Mammary epithelial cell (primary cell): ENCODE measurements at regions of chr9 and their contacts with region 1.

Region 1: DNA sequence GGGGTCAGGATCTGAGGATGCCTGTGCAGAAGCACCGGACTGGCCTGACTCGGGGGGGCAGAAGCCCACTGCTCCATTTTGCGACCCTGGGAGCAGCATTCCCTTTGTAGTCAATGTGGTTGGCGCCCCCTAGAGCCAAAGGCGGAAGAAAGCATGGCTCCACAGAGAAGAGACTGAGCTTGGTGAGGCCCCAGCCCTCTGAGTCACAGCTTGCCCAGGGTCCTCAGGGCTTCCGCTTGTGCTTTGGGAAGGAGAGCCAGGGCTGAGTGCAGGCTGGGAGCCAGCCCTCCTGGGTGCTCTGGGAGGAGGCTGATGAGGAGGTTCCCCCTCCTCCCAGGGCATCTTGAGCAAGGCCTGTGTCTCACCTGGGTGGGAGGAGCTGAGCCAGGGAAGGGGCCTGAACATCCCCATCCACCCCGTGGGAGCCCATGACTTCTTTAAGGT is 5.5 kb upstream of the AQP3 start:
- DNase-seq: peak; percentile 85
- H3K4me3 ChIP-seq: no peak overlapping the region
- H3K27ac ChIP-seq: peak overlapping the region; percentile 5
- H3K4me1 ChIP-seq: peaks cover 28% of the 10 kb centered on the region
- H3K27me3 ChIP-seq: no peaks in the 10 kb centered on the region
- CTCF ChIP-seq: peak; percentile 81 to 89

Region 2: DNA sequence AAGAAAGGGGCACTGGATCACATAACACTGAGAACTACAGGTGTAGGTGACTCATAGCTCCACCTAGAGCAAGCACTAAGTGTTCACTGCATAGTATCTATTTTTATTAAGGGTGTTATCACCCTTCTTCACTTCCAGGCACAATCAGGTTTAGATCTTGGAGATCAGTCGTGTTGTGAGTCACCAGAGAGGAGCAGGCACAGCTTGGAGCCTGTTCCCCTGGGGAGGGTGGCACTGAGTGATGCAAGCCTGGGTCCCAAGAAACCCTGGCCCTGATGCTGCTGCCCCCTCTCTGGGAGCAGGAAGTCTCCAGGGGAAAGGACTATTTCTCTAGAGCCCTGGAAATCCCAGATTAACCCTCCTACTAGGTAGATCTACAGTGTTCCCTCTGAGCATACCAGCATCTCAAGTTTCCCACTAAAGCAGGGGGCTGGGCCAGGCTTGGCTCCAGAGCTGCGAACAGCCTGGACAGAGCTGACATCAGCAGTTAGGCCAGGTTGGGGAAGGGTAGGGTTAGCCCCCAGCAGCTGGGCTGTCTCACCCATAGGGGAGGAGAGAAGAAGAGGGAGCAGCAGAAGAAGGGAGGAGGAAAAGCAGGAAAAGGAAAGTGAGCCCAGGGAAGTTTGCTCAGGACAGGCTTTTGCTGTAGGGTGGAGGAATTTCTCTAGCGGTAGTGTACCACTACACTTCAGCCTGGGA is 241.0 kb before region 1 on chr9:
- CTCF ChIA-PET with region 1: no interaction called
- dilution Hi-C with region 1: no loop called
- in situ Hi-C with region 1: no loop called
- intact Hi-C with region 1: no loop called
- DNase-seq: peak; percentile 82
- H3K4me3 ChIP-seq: no peak overlapping the region
- H3K27ac ChIP-seq: no peak overlapping the region
- H3K4me1 ChIP-seq: peaks cover 14% of the 10 kb centered on the region
- H3K27me3 ChIP-seq: no peaks in the 10 kb centered on the region
- CTCF ChIP-seq: peak in 1 of 2 donors; percentile 19

Region 3: GRCh38 chr9:33414268-33414667 is 38.6 kb before region 1 on chr9:
- CTCF ChIA-PET with region 1: interaction called, 14 read pairs
- dilution Hi-C with region 1: loop called (anchors 5 kb)
- in situ Hi-C with region 1: loop called in 1 of 2 experiments (anchors 5 kb)
- intact Hi-C with region 1: no loop called
- DNase-seq: no peak
- H3K4me3 ChIP-seq: no peak overlapping the region
- H3K27ac ChIP-seq: no peak overlapping the region
- H3K4me1 ChIP-seq: peaks cover 44% of the 10 kb centered on the region
- H3K27me3 ChIP-seq: no peaks in the 10 kb centered on the region
- CTCF ChIP-seq: no peak

Region 4: DNA sequence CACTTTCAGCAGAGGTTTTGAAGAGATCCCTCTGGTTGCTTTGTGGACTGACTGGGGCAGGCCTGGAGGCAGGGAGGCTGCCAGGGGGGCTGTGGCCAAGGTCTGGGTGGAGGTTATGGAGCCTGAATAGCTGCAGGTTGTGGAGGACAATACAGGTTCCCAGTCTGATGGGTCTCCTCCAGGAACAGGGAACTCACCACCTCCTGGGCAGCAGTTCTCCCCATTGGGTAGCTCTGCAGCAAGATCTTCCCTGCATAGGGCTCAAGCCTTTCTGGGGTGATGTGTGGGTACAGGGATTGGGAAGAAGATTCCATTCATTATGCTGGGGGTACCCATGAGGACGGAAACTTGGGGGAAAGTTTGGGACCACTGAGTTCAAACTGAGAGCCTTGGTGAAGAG is 12.2 kb before region 1 on chr9:
- CTCF ChIA-PET with region 1: interaction called, 13 read pairs
- dilution Hi-C with region 1: no loop called
- in situ Hi-C with region 1: no loop called
- intact Hi-C with region 1: no loop called
- DNase-seq: no peak
- H3K4me3 ChIP-seq: no peak overlapping the region
- H3K27ac ChIP-seq: no peak overlapping the region
- H3K4me1 ChIP-seq: peaks cover 20% of the 10 kb centered on the region
- H3K27me3 ChIP-seq: no peaks in the 10 kb centered on the region
- CTCF ChIP-seq: no peak

Region 5: GRCh38 chr9:33676746-33677505 is 224.1 kb after region 1 on chr9:
- CTCF ChIA-PET with region 1: interaction called, 10 read pairs
- dilution Hi-C with region 1: no loop called
- in situ Hi-C with region 1: no loop called
- intact Hi-C with region 1: no loop called
- DNase-seq: peak; percentile 12
- H3K4me3 ChIP-seq: peak overlapping the region; percentile 50 to 56 (median 54)
- H3K27ac ChIP-seq: peak overlapping the region; percentile 4
- H3K4me1 ChIP-seq: no peaks in the 10 kb centered on the region
- H3K27me3 ChIP-seq: no peaks in the 10 kb centered on the region
- CTCF ChIP-seq: no peak